CD4-positive, alpha-beta T cell (primary cell): ENCODE measurements at regions of chr15 and their contacts with region 1.

Region 1: DNA sequence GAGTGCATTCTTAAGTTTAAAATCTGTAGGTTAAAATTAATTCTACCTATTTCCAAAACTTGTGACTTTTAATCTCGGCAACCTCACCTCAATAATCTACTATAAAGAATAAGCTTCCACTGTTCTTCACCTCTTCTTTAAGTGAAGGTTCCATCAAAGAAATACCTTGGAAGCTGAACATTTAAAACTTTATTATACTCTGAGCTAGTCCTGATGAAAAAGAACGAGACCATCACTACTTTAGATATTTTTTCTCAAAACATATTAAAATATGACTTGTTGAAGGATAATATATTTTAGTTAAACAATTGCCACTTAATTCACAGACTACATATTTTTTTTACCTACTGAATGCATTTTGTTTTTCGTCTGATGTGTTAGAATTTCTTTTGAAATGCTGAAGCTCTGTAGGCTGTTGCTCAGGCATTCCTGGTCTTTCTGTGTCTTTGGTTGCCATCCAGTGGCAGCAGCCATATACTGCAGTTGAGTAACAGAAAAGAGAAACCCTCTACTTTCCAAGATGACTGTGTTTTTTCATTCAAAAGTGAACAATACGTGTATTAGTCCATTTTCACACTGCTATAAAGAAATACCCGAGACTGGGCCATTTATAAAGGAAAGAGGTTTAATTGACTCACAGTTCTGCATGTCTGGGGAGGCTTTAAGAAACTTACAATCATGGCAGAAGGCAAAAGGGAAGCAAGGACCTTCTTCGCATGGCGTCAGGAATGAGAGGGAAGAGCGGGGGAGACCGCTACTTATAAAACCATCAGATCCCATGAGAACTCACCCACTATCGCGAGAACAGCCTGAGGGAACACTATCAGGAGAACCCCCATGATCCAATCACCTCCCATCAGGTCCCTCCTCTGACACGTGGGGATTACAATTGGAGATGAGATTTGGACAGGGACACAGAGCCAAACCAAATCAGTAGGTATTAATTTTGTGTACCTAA is 4.5 kb upstream of the GOLGA8B start:
- DNase-seq: peak; percentile 37 to 82 (median 55)
- ATAC-seq: peak; percentile 59
- H3K4me3 ChIP-seq: peak overlapping the region; percentile 16
- H3K4me3 Mint-ChIP-seq: peak overlapping the region; percentile 77
- H3K27ac ChIP-seq: no peak overlapping the region
- H3K27ac Mint-ChIP-seq: no peak overlapping the region
- H3K4me1 ChIP-seq: peaks cover 11% of the 10 kb centered on the region
- H3K4me1 Mint-ChIP-seq: peaks cover 9% of the 10 kb centered on the region
- H3K27me3 ChIP-seq: no peaks in the 10 kb centered on the region
- H3K27me3 Mint-ChIP-seq: peaks cover 19% of the 10 kb centered on the region
- CTCF ChIP-seq: peak; percentile 93

Region 2: GRCh38 chr15:34055853-34056595 is 532.0 kb before region 1 on chr15:
- CTCF ChIA-PET with region 1: no interaction called
- POLR2A ChIA-PET with region 1: no interaction called
- intact Hi-C with region 1: loop called in 1 of 2 experiments (anchors 1 kb)
- DNase-seq: no peak
- ATAC-seq: no peak
- H3K4me3 ChIP-seq: no peak overlapping the region
- H3K4me3 Mint-ChIP-seq: no peak overlapping the region
- H3K27ac ChIP-seq: no peak overlapping the region
- H3K27ac Mint-ChIP-seq: no peak overlapping the region
- H3K4me1 ChIP-seq: no peaks in the 10 kb centered on the region
- H3K4me1 Mint-ChIP-seq: no peaks in the 10 kb centered on the region
- H3K27me3 ChIP-seq: no peaks in the 10 kb centered on the region
- H3K27me3 Mint-ChIP-seq: no peaks in the 10 kb centered on the region
- CTCF ChIP-seq: no peak

Region 3: DNA sequence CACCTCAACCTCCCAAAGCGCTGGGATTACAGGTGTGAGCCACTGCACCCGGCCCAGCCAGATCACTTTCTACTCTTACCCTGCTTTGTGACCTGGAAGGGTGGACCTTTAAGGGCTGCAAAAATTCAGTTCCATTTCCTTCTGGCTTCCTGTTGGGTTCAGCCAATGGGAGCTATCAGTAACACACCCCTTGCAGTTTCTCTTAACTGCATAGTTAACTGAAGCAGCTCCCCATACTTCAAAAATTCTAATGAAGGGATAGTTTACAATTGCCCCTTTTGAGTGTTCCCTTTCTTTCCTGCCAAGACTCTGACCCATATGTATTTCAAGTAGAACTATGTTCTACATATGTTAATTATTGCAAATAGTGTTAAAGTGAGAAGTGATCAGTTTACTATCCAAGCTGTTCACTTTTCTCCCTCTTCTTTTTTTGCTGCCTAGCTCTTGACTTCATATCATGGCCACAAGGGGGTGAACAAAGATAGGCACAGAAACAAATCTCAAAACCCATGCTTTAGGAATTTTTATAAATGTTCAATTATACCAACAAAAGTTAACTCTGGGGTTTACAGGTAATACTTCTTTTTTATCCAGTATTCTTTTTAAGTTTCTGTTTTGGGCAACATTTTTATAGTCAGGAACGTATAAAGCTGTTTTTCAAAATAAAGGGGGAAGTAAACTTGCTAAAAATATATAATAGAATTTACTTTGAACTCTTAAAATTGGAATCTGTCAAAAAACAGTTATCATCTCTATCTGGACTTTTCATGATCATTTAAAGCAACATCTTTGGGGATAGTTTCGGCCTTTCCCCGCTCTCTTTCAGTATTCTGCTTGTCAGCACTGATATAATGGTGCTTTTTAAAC is 478.0 kb before region 1 on chr15:
- CTCF ChIA-PET with region 1: no interaction called
- POLR2A ChIA-PET with region 1: no interaction called
- intact Hi-C with region 1: loop called in 1 of 2 experiments (anchors 5 kb)
- DNase-seq: peak in 3 of 14 experiments; percentile 29 to 48 (median 44)
- ATAC-seq: peak; percentile 24
- H3K4me3 ChIP-seq: no peak overlapping the region
- H3K4me3 Mint-ChIP-seq: no peak overlapping the region
- H3K27ac ChIP-seq: no peak overlapping the region
- H3K27ac Mint-ChIP-seq: no peak overlapping the region
- H3K4me1 ChIP-seq: no peaks in the 10 kb centered on the region
- H3K4me1 Mint-ChIP-seq: no peaks in the 10 kb centered on the region
- H3K27me3 ChIP-seq: no peaks in the 10 kb centered on the region
- H3K27me3 Mint-ChIP-seq: no peaks in the 10 kb centered on the region
- CTCF ChIP-seq: peak; percentile 31

Region 4: DNA sequence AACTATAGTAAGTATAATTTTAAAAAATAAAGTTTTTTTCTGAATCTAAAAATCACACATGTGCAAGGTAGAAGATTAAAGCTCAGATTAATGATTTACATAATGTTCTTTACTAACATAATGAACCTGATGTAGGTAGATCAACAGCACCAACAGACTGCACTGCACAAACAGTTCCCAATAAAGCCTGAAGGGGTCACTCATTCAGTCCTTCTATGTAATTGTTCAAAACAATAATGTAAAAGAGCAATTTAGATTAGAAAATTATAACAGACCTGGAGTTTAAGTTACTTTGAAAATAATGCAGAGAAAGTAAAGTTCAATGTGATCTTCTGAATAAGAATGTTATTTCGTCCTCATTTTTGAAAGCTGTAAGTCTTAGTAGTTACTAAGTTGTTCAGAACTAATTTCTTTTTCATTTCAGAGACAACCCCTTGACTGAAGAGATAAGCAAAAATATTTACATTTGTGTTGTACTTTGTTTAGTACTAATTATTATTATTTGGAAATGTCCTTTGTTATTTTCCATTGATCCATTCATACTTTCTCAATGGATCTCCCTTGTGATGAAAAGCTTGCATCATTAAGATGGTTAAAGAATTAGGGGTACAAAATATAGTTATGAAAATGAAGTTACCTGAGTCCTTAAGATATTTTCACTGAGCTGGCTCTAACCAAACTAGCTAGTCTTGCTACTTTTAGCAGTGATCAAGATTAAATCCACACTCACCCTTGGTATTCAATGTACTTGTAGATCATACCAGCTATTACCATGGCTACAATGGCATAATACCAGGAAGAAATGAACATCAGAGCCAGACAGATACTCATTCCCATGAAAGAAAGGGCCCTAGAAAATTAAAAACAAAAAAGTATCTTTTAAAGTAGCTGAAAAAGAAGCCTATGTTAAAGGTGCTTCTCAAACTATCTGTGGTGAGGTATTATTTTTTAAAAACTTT is 346.3 kb before region 1 on chr15:
- CTCF ChIA-PET with region 1: interaction called, 8 read pairs
- POLR2A ChIA-PET with region 1: no interaction called
- intact Hi-C with region 1: loop called (anchors 5 kb)
- DNase-seq: peak in 9 of 14 experiments; percentile 7 to 77 (median 25)
- ATAC-seq: peak; percentile 99
- H3K4me3 ChIP-seq: no peak overlapping the region
- H3K4me3 Mint-ChIP-seq: no peak overlapping the region
- H3K27ac ChIP-seq: no peak overlapping the region
- H3K27ac Mint-ChIP-seq: peak overlapping the region; percentile 22
- H3K4me1 ChIP-seq: no peaks in the 10 kb centered on the region
- H3K4me1 Mint-ChIP-seq: peaks cover 4% of the 10 kb centered on the region
- H3K27me3 ChIP-seq: no peaks in the 10 kb centered on the region
- H3K27me3 Mint-ChIP-seq: no peaks in the 10 kb centered on the region
- CTCF ChIP-seq: peak; percentile 93

Region 5: DNA sequence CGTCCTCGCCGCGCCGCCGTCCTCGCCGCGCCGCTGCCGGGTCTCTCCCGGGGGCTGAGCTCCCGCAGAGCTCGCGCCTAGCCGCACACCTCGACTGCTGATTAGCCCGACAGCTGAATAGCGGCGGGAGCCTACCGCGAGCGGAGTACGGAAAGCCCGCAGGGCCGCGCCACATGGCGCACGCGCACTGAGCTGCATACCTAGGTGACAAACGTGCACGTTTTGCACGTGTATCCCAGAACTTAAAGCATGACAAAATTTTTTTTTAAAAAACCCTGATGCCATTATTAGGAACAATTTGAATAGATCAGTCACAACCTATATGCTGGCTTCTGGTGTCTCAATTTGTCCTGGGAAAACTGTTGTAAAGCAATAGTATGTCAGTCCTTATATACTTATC is 150.3 kb before region 1 on chr15 and contains the start of gene GOLGA8A:
- CTCF ChIA-PET with region 1: no interaction called
- POLR2A ChIA-PET with region 1: interaction called, 14 read pairs
- intact Hi-C with region 1: no loop called
- DNase-seq: peak; percentile 72 to 93 (median 84)
- ATAC-seq: peak; percentile 79
- H3K4me3 ChIP-seq: peak within 1 kb of the TSS; percentile 60
- H3K4me3 Mint-ChIP-seq: peak within 1 kb of the TSS; percentile 100
- H3K27ac ChIP-seq: peak within 1 kb of the TSS in 1 of 2 donors; percentile 7
- H3K27ac Mint-ChIP-seq: peak within 1 kb of the TSS; percentile 96
- H3K4me1 ChIP-seq: peaks cover 17% of the 10 kb centered on the region
- H3K4me1 Mint-ChIP-seq: peaks cover 27% of the 10 kb centered on the region
- H3K27me3 ChIP-seq: no peaks in the 10 kb centered on the region
- H3K27me3 Mint-ChIP-seq: peaks cover 5% of the 10 kb centered on the region
- CTCF ChIP-seq: no peak
- total RNA-seq, gene GOLGA8A: 276 to 295 TPM